ENCODE measurements at regions of chr4 and their contacts with region 1.

Region 1: GRCh38 chr4:76511947-76512346 is 76.9 kb downstream of the SHROOM3 start:
- DNase-seq: no peak
- H3K4me3 Mint-ChIP-seq: peak overlapping the region; percentile 36
- H3K27ac Mint-ChIP-seq: peak overlapping the region; percentile 83
- H3K4me1 Mint-ChIP-seq: peaks cover 40% of the 10 kb centered on the region
- H3K27me3 Mint-ChIP-seq: no peaks in the 10 kb centered on the region
- CTCF ChIP-seq: no peak

Region 2: DNA sequence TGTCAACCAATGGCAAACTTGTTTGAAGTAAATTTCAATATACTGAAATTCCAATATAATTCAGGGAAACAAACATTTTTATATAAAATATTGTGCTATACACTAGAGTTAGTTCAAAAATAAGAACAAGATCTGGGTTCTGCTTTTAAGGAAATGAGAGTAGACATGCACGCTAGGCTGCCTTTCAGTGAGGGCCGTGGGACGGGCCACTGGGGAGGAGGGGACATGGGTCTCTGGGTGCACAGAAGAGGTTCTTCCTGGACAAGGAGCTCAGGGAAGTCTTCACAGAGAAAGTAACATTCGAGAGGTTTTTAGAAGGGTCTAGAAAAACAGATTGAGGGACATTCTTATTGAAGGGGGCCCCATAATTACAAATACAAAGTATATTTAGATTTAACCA is 12.5 kb before region 1 on chr4:
- CTCF ChIA-PET with region 1: no interaction called
- intact Hi-C with region 1: no loop called
- DNase-seq: no peak
- H3K4me3 Mint-ChIP-seq: no peak overlapping the region
- H3K27ac Mint-ChIP-seq: no peak overlapping the region
- H3K4me1 Mint-ChIP-seq: peaks cover 15% of the 10 kb centered on the region
- H3K27me3 Mint-ChIP-seq: no peaks in the 10 kb centered on the region
- CTCF ChIP-seq: no peak

Region 3: GRCh38 chr4:76546282-76547171 is 34.6 kb after region 1 on chr4:
- CTCF ChIA-PET with region 1: interaction called, 3 read pairs
- intact Hi-C with region 1: loop called (anchors 5 kb)
- DNase-seq: peak; percentile 49
- H3K4me3 Mint-ChIP-seq: peak overlapping the region; percentile 26
- H3K27ac Mint-ChIP-seq: peak overlapping the region; percentile 91
- H3K4me1 Mint-ChIP-seq: peaks cover 54% of the 10 kb centered on the region
- H3K27me3 Mint-ChIP-seq: no peaks in the 10 kb centered on the region
- CTCF ChIP-seq: no peak

Region 4: DNA sequence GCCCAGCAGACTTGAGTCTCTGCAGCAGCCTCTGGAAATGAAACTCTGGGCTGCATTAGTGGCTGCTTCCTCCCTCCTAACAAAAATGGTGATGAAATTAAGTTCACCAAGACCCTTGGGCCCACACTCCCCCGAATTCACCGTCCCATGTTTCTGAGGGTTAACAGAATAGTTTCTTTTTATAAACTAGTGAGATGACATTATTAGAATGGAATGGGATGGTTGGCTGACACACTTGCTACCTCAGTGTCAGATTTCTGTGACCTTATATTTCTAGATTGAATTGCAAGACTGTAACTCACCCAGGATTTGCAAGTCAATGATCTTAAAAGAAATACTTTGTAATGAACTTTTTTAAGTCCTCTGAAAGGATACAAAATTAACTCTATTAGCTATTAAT is 50.2 kb after region 1 on chr4:
- CTCF ChIA-PET with region 1: no interaction called
- intact Hi-C with region 1: loop called (anchors 2 kb)
- DNase-seq: no peak
- H3K4me3 Mint-ChIP-seq: no peak overlapping the region
- H3K27ac Mint-ChIP-seq: peak overlapping the region; percentile 91
- H3K4me1 Mint-ChIP-seq: peaks cover 42% of the 10 kb centered on the region
- H3K27me3 Mint-ChIP-seq: no peaks in the 10 kb centered on the region
- CTCF ChIP-seq: no peak

Region 5: DNA sequence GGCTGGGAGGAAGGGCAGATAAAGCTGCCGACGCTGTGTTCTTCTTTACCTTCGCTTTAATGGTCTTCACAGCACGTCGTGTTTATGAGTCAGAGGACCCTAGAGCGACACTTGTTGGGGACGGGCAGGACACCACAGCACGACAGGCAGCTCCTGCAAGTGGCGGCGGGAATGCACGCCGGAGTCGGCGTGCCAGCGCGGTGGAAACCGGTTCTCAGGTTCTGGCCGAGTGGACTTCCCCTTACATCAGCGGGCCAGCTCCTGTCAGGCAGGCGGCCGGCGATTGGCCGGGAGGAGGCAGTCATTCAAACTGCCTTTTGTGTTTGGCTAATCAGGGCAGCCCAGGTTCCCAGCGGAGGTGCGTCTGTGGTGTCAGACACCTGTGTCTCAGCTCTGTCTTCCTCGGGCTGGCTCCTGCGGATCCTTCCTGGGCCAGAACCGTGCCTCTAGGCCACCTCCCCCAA is 74.0 kb after region 1 on chr4:
- CTCF ChIA-PET with region 1: no interaction called
- intact Hi-C with region 1: loop called (anchors 5 kb)
- DNase-seq: peak; percentile 89
- H3K4me3 Mint-ChIP-seq: peak overlapping the region; percentile 77
- H3K27ac Mint-ChIP-seq: peak overlapping the region; percentile 50
- H3K4me1 Mint-ChIP-seq: peaks cover 37% of the 10 kb centered on the region
- H3K27me3 Mint-ChIP-seq: no peaks in the 10 kb centered on the region
- CTCF ChIP-seq: no peak

Region 6: DNA sequence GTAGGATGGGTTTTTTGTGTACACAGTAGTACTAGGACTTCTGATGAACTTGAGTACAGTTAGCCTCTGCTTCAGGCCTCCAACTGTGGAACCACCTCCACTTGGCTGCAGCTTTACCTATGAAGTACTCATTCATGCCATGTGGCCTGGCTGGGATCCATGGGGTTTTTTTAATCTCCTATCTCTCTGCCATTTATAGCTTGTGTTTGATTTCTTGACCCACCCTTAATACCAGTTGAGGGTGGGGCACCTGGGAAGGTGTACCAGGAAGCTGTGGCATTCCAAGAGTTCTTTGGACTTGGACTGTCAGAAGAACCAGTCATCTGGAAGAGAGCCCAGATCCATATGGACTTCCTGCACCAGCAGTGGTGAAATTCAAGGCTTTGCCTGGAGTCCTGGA is 153.2 kb after region 1 on chr4:
- CTCF ChIA-PET with region 1: no interaction called
- intact Hi-C with region 1: loop called (anchors 5 kb)
- DNase-seq: peak; percentile 80
- H3K4me3 Mint-ChIP-seq: peak overlapping the region; percentile 15
- H3K27ac Mint-ChIP-seq: peak overlapping the region; percentile 82
- H3K4me1 Mint-ChIP-seq: peaks cover 35% of the 10 kb centered on the region
- H3K27me3 Mint-ChIP-seq: no peaks in the 10 kb centered on the region
- CTCF ChIP-seq: no peak

Region 7: DNA sequence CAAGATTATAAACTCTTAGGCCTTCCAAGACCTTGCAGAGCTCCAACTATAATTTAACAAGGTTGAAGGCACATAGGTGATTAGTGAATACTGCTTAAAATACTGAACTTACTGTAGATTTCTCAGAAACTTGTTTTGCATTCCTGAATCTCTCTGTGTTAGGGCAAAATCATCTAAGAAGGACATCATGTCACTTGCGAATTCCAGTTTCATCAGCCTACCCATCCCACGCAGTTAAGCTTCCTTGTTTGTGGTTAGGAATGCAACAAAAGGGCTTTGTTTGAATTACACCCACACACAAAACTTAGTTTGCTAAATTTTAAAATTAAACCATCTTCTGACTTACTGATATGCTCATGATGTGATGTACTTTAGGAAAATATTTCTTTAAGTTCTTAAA is 212.0 kb after region 1 on chr4:
- CTCF ChIA-PET with region 1: no interaction called
- intact Hi-C with region 1: loop called (anchors 5 kb)
- DNase-seq: peak; percentile 28
- H3K4me3 Mint-ChIP-seq: peak overlapping the region; percentile 30
- H3K27ac Mint-ChIP-seq: peak overlapping the region; percentile 81
- H3K4me1 Mint-ChIP-seq: peaks cover 79% of the 10 kb centered on the region
- H3K27me3 Mint-ChIP-seq: no peaks in the 10 kb centered on the region
- CTCF ChIP-seq: no peak

Region 8: GRCh38 chr4:76748649-76749048 is 236.7 kb after region 1 on chr4:
- CTCF ChIA-PET with region 1: interaction called, 3 read pairs
- intact Hi-C with region 1: loop called (anchors 5 kb)
- DNase-seq: peak; percentile 37
- H3K4me3 Mint-ChIP-seq: no peak overlapping the region
- H3K27ac Mint-ChIP-seq: peak overlapping the region; percentile 66
- H3K4me1 Mint-ChIP-seq: peaks cover 29% of the 10 kb centered on the region
- H3K27me3 Mint-ChIP-seq: no peaks in the 10 kb centered on the region
- CTCF ChIP-seq: no peak

Measured in Calu3 (cell line).